ENCODE measurements at regions of chr22 and their contacts with region 1.

Region 1: GRCh38 chr22:28800308-28801077 is at the start of gene XBP1:
- DNase-seq: peak; percentile 69 to 95 (median 82)
- ATAC-seq: peak; percentile 94 to 97 (median 96)
- H3K4me3 ChIP-seq: peak within 1 kb of the TSS; percentile 74 to 99
- H3K4me3 Mint-ChIP-seq: peak within 1 kb of the TSS; percentile 92 to 97 (median 94)
- H3K27ac ChIP-seq: peak within 1 kb of the TSS; percentile 88
- H3K27ac Mint-ChIP-seq: peak within 1 kb of the TSS; percentile 98 to 99
- H3K4me1 ChIP-seq: peaks cover 19 to 42% of the 10 kb centered on the region in 2 experiments
- H3K4me1 Mint-ChIP-seq: peaks cover 49 to 60% (median 58%) of the 10 kb centered on the region in 3 donors
- H3K27me3 ChIP-seq: no peaks in the 10 kb centered on the region
- H3K27me3 Mint-ChIP-seq: no peaks in the 10 kb centered on the region
- total RNA-seq, gene XBP1: 132 to 205 (median 140) TPM

Region 2: GRCh38 chr22:28541137-28541536 is 259.4 kb before region 1 on chr22:
- CTCF ChIA-PET with region 1: no interaction called
- POLR2A ChIA-PET with region 1: no interaction called
- DNase-seq: no peak
- ATAC-seq: no peak
- H3K4me3 ChIP-seq: no peak overlapping the region
- H3K4me3 Mint-ChIP-seq: no peak overlapping the region
- H3K27ac ChIP-seq: no peak overlapping the region
- H3K27ac Mint-ChIP-seq: no peak overlapping the region
- H3K4me1 ChIP-seq: no peaks in the 10 kb centered on the region
- H3K4me1 Mint-ChIP-seq: no peaks in the 10 kb centered on the region
- H3K27me3 ChIP-seq: no peaks in the 10 kb centered on the region
- H3K27me3 Mint-ChIP-seq: peaks cover 4 to 6% of the 10 kb centered on the region in 2 donors

Region 3: GRCh38 chr22:28810821-28811491 is 10.5 kb after region 1 on chr22:
- CTCF ChIA-PET with region 1: interaction called in 1 of 2 experiments, 35 read pairs
- POLR2A ChIA-PET with region 1: interaction called, 3 to 23 read pairs
- DNase-seq: peak in 22 of 35 experiments; percentile 8 to 67 (median 28)
- ATAC-seq: peak; percentile 54 to 67 (median 61)
- H3K4me3 ChIP-seq: peak overlapping the region; percentile 22 to 72
- H3K4me3 Mint-ChIP-seq: peak overlapping the region; percentile 73 to 81 (median 77)
- H3K27ac ChIP-seq: peak overlapping the region; percentile 61
- H3K27ac Mint-ChIP-seq: peak overlapping the region; percentile 88 to 92
- H3K4me1 ChIP-seq: peaks cover 51 to 71% of the 10 kb centered on the region in 2 experiments
- H3K4me1 Mint-ChIP-seq: peaks cover 73 to 83% (median 83%) of the 10 kb centered on the region in 3 donors
- H3K27me3 ChIP-seq: no peaks in the 10 kb centered on the region
- H3K27me3 Mint-ChIP-seq: no peaks in the 10 kb centered on the region